ENCODE measurements at regions of chr5 and their contacts with region 1.

Region 1: GRCh38 chr5:3602785-3603502 is 7.3 kb downstream of the IRX1 start:
- DNase-seq: peak in 4 of 5 donors; percentile 29 to 55 (median 50)
- ATAC-seq: peak; percentile 48 to 88 (median 78)
- H3K4me3 ChIP-seq: peak overlapping the region in 6 of 12 donors; percentile 5 to 21 (median 11)
- H3K27ac ChIP-seq: no peak overlapping the region
- H3K4me1 ChIP-seq: peaks cover 0 to 36% (median 5%) of the 10 kb centered on the region in 12 donors
- H3K27me3 ChIP-seq: peaks cover 37 to 98% (median 87%) of the 10 kb centered on the region in 9 donors
- CTCF ChIP-seq: peak; percentile 35 to 70 (median 60)
- POLR2A ChIP-seq: no peak

Region 2: GRCh38 chr5:2207952-2208544 is 1394.9 kb before region 1 on chr5:
- intact Hi-C with region 1: loop called in 2 of 10 experiments (anchors 5 kb)
- DNase-seq: peak in 1 of 5 donors; percentile 48
- ATAC-seq: peak in 3 of 4 donors; percentile 41 to 75 (median 70)
- H3K4me3 ChIP-seq: no peak overlapping the region
- H3K27ac ChIP-seq: no peak overlapping the region
- H3K4me1 ChIP-seq: no peaks in the 10 kb centered on the region
- H3K27me3 ChIP-seq: peaks cover 0 to 31% (median 5%) of the 10 kb centered on the region in 9 donors
- CTCF ChIP-seq: peak in 9 of 12 donors; percentile 9 to 48 (median 27)
- POLR2A ChIP-seq: no peak

Region 3: GRCh38 chr5:2751592-2752021 is 851.3 kb before region 1 on chr5 and contains the start of gene IRX2:
- intact Hi-C with region 1: loop called in 3 of 10 experiments (anchors 10 kb)
- DNase-seq: peak; percentile 60 to 93 (median 85)
- ATAC-seq: peak; percentile 72 to 96 (median 93)
- H3K4me3 ChIP-seq: peak within 1 kb of the TSS; percentile 17 to 59 (median 45)
- H3K27ac ChIP-seq: peak within 1 kb of the TSS in 8 of 12 donors; percentile 10 to 82 (median 54)
- H3K4me1 ChIP-seq: peaks cover 0 to 59% (median 10%) of the 10 kb centered on the region in 12 donors
- H3K27me3 ChIP-seq: peaks cover 44 to 97% (median 84%) of the 10 kb centered on the region in 9 donors
- CTCF ChIP-seq: no peak
- POLR2A ChIP-seq: no peak
- total RNA-seq, gene IRX2: 0.17 to 3.7 (median 0.56) TPM

Region 4: DNA sequence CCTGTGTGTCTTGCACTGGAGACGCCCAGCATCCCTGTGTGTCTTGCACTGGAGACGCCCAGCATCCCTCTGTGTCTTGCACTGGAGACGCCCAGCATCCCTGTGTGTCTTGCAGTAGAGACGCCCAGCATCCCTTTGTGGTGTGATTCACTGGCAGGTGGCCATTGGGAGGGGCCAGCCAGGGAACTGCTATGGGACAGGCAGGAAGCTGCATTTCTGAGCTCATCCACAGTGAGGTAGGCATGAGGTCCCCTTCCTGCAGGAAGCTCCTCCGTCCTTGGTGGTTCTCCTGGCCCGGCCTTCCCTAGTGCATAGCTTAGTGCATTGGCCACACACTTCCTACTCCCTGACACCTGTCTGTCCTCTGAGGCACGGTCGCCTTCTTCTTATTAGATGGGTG is 36.2 kb after region 1 on chr5:
- intact Hi-C with region 1: no loop called
- DNase-seq: no peak
- ATAC-seq: no peak
- H3K4me3 ChIP-seq: no peak overlapping the region
- H3K27ac ChIP-seq: no peak overlapping the region
- H3K4me1 ChIP-seq: no peaks in the 10 kb centered on the region
- H3K27me3 ChIP-seq: peaks cover 0 to 7% (median 0%) of the 10 kb centered on the region in 9 donors
- CTCF ChIP-seq: no peak
- POLR2A ChIP-seq: no peak

Measured in heart left ventricle (tissue), 16 donors.